Activated naive CD4-positive, alpha-beta T cell treated with anti-CD3 and anti-CD28 coated beads for 36 hours (primary cell): ENCODE measurements at regions of chr5 and their contacts with region 1.

Region 1: DNA sequence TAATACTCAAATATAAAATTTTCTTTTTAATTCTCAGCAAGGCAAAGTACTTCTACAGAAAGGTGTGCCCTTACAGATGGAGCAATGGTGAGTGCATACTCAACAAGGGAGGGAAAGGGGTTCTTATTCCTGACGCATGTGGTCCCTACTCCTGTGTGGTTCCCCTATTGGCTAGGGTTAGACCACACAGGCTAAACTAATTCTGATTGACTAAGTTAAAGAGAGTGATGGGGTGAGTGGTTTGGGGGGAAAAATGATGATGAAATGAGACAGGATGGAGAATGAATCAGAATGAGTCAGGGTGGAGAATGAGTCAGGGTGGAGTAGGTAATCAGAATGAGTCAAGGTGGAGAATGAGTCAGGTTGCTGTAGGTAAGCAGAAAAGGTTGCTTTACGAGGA is 22.9 kb upstream of the HMGCS1 start:
- DNase-seq: peak; percentile 40
- H3K4me3 Mint-ChIP-seq: no peak overlapping the region
- H3K27ac Mint-ChIP-seq: peak overlapping the region; percentile 84
- H3K4me1 Mint-ChIP-seq: peaks cover 12% of the 10 kb centered on the region
- H3K27me3 Mint-ChIP-seq: peaks cover 16% of the 10 kb centered on the region

Region 2: GRCh38 chr5:43110606-43111442 is 225.3 kb before region 1 on chr5:
- CTCF ChIA-PET with region 1: interaction called, 4 read pairs
- intact Hi-C with region 1: loop called (anchors 1 kb)
- DNase-seq: peak; percentile 81
- H3K4me3 Mint-ChIP-seq: no peak overlapping the region
- H3K27ac Mint-ChIP-seq: peak overlapping the region; percentile 71
- H3K4me1 Mint-ChIP-seq: peaks cover 43% of the 10 kb centered on the region
- H3K27me3 Mint-ChIP-seq: no peaks in the 10 kb centered on the region

Region 3: GRCh38 chr5:43320846-43321245 is 15.3 kb before region 1 on chr5:
- CTCF ChIA-PET with region 1: interaction called, 3 read pairs
- intact Hi-C with region 1: loop called (anchors 1 kb)
- DNase-seq: no peak
- H3K4me3 Mint-ChIP-seq: no peak overlapping the region
- H3K27ac Mint-ChIP-seq: no peak overlapping the region
- H3K4me1 Mint-ChIP-seq: peaks cover 12% of the 10 kb centered on the region
- H3K27me3 Mint-ChIP-seq: no peaks in the 10 kb centered on the region